ENCODE measurements at regions of chr6 and their contacts with region 1.

Region 1: DNA sequence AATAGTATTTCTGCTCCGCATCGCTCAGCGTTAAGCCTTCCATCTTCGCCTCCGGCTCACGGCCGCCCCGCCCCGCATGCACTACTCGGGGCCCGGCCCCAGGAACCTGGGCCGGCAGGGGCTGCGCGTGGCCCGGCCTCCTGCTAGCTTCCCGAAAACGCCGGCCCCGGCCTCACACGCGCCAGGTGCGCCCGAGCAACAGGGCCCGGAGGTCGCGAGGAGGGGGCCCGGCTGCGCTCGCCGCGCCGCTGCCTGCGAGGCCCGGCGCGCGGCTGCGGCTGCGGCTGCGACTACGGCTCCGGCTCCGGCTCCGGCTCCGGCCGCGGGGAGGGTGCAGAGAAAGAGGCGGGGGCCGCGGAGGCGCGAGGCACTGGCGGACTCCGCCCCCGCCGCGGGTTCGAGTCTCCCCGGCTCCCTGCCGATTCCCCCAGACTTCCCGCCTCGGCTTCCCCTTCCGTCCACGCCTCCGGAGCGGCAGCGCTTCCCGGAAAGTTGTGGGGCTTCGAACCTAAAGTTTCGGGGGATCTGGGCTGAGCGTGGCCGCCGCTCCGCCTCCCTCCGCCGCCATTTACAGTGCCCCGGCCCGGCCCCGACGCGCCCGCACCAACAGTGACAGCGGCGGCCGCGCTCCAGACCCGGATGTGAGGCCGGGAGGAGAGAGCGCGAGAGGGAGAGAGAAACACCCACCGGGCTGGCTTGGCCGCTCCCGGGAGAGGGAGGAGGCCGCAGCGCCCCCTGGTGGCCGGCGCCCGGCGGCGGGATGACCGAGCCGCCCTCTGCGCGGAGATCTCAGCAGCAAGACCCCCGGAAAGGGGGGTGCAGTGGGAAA is at the start of gene REPS1:
- DNase-seq: peak; percentile 82 to 98 (median 90)

Region 2: DNA sequence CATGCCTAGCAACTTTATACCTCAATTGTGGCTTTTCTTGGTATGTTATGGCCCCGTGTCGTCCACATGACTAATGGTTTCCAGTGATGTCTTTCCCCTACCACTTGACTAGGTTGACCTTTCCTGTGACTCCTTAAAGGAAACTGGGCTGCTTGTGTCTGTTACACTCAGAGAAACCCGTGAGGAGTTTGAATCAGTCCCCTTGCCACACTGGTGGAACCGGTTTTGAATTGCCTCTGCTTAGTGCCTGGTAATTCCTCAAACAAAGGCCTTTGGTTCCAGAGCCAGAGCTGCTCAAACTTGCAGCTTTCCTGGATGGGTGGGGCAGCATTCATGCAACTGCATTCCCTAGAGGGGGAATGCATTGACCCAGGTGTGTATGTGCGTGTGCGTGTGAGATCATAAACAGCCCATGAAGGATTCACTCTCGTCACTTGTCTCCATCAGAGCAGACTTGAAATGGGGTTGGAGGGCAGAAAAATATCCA is 170.0 kb before region 1 on chr6:
- intact Hi-C with region 1: loop called (anchors 1 kb)
- DNase-seq: no peak

Region 3: GRCh38 chr6:138972226-138972665 is 15.6 kb before region 1 on chr6:
- intact Hi-C with region 1: loop called (anchors 2 kb)
- DNase-seq: no peak

Region 4: DNA sequence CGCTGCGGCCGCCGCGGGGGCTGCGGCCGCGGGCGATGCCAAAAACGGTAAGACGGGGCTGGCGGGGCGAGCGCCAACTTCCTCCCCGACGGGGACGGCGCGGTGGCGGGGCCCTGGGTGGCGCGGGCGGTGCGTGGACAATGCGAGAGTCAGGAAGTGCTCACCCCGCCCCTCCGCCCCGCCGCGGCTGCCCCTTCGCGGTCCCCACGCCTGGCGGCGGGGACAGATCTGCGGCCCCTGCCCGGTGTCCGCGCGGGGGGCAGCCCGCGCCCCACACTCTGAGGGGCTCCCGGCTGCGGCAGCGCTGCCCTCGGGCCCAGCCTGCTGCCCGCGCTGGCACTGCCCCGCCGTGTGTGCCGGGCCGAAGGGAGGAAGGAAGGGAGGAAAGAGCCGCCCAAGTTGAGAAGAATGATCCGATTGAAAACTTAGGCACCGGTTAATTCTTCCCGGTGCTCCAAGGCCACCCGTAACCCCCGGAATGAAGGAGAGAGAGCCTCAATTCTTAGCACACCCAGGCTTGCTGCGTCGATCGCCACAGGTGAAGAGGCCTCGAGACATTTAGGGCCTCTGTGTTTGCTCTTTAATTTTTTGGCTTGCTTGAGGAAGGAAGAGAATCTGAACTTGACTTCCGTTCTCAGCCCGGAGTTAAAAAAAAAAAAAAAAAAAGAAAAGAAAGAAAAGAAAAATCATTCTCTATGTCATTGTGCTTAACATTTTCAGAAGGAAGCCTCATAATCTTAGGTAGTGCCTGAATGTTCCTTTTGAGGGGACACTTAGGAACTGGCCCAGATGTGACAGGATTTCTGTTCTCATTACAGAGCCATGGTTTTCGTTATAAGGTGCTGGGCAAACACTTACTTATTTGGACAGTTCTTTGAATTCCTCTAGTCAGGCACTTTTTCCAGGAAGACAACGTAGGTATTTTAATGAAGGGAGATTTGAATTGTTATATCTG is 148.0 kb after region 1 on chr6:
- intact Hi-C with region 1: loop called (anchors 2 kb)
- DNase-seq: peak; percentile 33 to 93 (median 52)

Region 5: DNA sequence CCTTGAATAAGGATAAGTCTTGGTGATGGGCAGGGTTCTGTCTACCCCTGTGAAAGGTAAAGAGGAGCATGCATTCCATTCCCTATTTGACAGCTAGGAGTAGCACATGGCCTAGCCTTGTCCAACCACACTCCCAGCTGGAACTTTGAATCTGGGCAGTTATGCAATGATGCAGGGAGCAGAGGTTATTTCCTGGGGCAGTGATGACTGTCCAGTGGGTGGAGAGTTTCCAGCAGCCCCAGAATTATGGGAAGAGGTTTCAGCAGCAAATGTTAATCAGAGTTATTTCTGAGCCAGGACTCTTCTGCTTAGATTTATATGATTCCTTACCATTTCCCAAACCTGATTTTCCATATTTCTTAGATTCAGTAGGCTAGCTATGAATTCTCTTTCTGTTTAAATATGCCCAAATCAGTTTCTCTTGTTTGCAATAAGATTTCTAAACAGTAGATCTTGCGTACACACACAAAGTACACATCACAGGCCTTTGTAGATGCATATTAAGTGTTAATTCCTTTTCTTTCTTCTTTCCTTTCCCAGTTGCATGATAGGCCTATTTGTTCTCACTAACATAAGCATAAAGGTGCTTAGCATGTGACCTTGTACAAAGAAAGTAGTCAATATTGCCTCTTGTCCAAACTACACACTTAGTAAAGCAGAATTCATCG is 321.2 kb after region 1 on chr6:
- intact Hi-C with region 1: no loop called
- DNase-seq: no peak

Region 6: GRCh38 chr6:139369568-139370282 is 381.9 kb after region 1 on chr6:
- intact Hi-C with region 1: loop called (anchors 5 kb)
- DNase-seq: no peak